T-cell (primary cell): ENCODE measurements at regions of chr16 and their contacts with region 1.

Region 1: DNA sequence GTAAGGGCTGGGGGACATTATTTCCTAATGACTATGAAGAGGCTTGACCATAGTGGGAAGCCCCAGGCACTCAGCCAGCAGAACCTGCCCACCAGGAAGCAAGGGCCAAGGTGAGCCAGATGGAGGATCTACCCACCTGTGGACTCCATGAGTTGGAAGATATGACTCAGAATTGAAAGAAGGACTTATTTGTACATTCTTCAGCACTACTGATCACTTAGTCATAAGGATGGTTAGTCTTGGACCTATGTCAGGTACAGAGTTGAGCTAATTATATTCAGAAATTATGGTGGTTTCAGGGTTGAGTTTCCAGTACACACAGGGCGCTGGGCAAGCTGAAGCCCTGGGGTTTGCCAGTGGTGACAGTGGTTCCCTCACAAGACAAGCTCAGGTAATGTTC is 24.0 kb upstream of the GRIN2A start:
- DNase-seq: no peak
- ATAC-seq: no peak
- H3K4me3 ChIP-seq: no peak overlapping the region
- H3K4me3 Mint-ChIP-seq: no peak overlapping the region
- H3K27ac ChIP-seq: no peak overlapping the region
- H3K27ac Mint-ChIP-seq: no peak overlapping the region
- H3K4me1 ChIP-seq: no peaks in the 10 kb centered on the region
- H3K4me1 Mint-ChIP-seq: no peaks in the 10 kb centered on the region
- H3K27me3 ChIP-seq: peaks cover 0 to 22% of the 10 kb centered on the region in 2 experiments
- H3K27me3 Mint-ChIP-seq: peaks cover 9 to 13% of the 10 kb centered on the region in 2 donors

Region 2: GRCh38 chr16:10136916-10137315 is 69.3 kb before region 1 on chr16:
- CTCF ChIA-PET with region 1: no interaction called
- POLR2A ChIA-PET with region 1: no interaction called
- DNase-seq: no peak
- ATAC-seq: no peak
- H3K4me3 ChIP-seq: no peak overlapping the region
- H3K4me3 Mint-ChIP-seq: no peak overlapping the region
- H3K27ac ChIP-seq: no peak overlapping the region
- H3K27ac Mint-ChIP-seq: no peak overlapping the region
- H3K4me1 ChIP-seq: no peaks in the 10 kb centered on the region
- H3K4me1 Mint-ChIP-seq: no peaks in the 10 kb centered on the region
- H3K27me3 ChIP-seq: peaks cover 0 to 4% of the 10 kb centered on the region in 2 experiments
- H3K27me3 Mint-ChIP-seq: no peaks in the 10 kb centered on the region

Region 3: GRCh38 chr16:10280262-10281170 is 74.3 kb after region 1 on chr16:
- CTCF ChIA-PET with region 1: interaction called in 1 of 2 experiments, 12 read pairs
- POLR2A ChIA-PET with region 1: no interaction called
- DNase-seq: no peak
- ATAC-seq: no peak
- H3K4me3 ChIP-seq: no peak overlapping the region
- H3K4me3 Mint-ChIP-seq: no peak overlapping the region
- H3K27ac ChIP-seq: no peak overlapping the region
- H3K27ac Mint-ChIP-seq: no peak overlapping the region
- H3K4me1 ChIP-seq: peaks cover 2 to 4% of the 10 kb centered on the region in 2 experiments
- H3K4me1 Mint-ChIP-seq: peaks cover 6 to 10% (median 8%) of the 10 kb centered on the region in 3 donors
- H3K27me3 ChIP-seq: no peaks in the 10 kb centered on the region
- H3K27me3 Mint-ChIP-seq: no peaks in the 10 kb centered on the region